MCF 10A (cell line): ENCODE measurements at regions of chr19 and their contacts with region 1.

Region 1: GRCh38 chr19:2950286-2951124 is 5.7 kb upstream of the ZNF77 start:
- DNase-seq: peak; percentile 100
- H3K4me3 Mint-ChIP-seq: peak overlapping the region; percentile 96
- H3K27ac Mint-ChIP-seq: peak overlapping the region; percentile 99
- H3K4me1 Mint-ChIP-seq: peaks cover 16% of the 10 kb centered on the region
- H3K27me3 Mint-ChIP-seq: no peaks in the 10 kb centered on the region
- CTCF ChIP-seq: no peak

Region 2: GRCh38 chr19:2811735-2812406 is 138.6 kb before region 1 on chr19:
- CTCF ChIA-PET with region 1: no interaction called
- POLR2A ChIA-PET with region 1: no interaction called
- intact Hi-C with region 1: no loop called
- DNase-seq: no peak
- H3K4me3 Mint-ChIP-seq: no peak overlapping the region
- H3K27ac Mint-ChIP-seq: no peak overlapping the region
- H3K4me1 Mint-ChIP-seq: no peaks in the 10 kb centered on the region
- H3K27me3 Mint-ChIP-seq: no peaks in the 10 kb centered on the region
- CTCF ChIP-seq: no peak

Region 3: GRCh38 chr19:2887391-2887914 is 63.1 kb before region 1 on chr19:
- CTCF ChIA-PET with region 1: interaction called, 41 read pairs
- POLR2A ChIA-PET with region 1: interaction called, 30 read pairs
- intact Hi-C with region 1: loop called (anchors 1 kb)
- DNase-seq: peak; percentile 70
- H3K4me3 Mint-ChIP-seq: no peak overlapping the region
- H3K27ac Mint-ChIP-seq: no peak overlapping the region
- H3K4me1 Mint-ChIP-seq: no peaks in the 10 kb centered on the region
- H3K27me3 Mint-ChIP-seq: no peaks in the 10 kb centered on the region
- CTCF ChIP-seq: peak; percentile 61

Region 4: DNA sequence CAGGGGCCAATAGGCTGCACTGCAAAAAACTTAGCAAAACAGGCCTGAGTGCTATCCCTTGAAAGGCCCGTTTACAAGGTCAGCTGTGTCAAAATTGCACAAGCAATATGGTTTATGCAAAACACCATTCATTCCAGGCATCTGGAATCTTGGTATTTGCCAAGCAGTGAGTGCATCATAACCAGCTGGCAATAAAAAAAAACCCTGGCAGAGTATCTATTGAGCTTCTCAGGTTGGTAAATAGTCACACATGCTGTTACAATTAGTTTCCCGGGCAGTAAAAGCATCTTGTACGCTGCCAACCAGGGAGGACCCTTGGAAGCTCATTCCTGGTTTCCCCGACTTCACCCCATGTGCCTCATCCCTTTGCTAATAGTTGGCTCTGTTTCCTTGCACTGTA is 27.0 kb before region 1 on chr19:
- CTCF ChIA-PET with region 1: interaction called, 5 read pairs
- POLR2A ChIA-PET with region 1: interaction called, 37 read pairs
- intact Hi-C with region 1: no loop called
- DNase-seq: peak; percentile 74
- H3K4me3 Mint-ChIP-seq: no peak overlapping the region
- H3K27ac Mint-ChIP-seq: peak overlapping the region; percentile 46
- H3K4me1 Mint-ChIP-seq: peaks cover 12% of the 10 kb centered on the region
- H3K27me3 Mint-ChIP-seq: no peaks in the 10 kb centered on the region
- CTCF ChIP-seq: no peak

Region 5: DNA sequence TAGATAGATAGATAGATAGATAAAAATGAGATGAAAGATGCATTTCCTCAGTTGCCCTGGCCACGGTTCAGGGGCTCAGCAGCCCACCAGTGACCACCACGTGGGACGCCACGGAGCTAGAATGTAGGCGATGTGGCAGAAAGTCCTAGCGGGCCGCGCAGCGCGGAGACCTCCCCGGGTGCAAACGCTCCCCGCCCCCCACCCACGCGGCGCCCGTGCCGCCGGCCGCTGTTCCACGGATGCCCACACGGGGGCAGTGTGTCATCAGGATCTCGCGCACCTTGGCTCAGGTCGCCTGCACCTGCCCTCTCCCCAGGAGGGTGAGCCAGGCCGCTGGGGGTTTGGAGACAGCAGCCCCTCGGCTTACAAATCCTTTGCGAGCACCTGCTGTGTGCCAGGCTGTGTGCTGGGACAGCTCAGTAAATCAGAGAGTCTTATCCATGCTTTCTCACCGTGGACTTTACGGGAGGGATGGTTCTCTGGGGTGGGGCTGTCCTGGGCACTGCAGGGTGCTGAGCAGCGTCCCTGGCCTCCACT is 125.5 kb after region 1 on chr19:
- CTCF ChIA-PET with region 1: interaction called, 7 read pairs
- POLR2A ChIA-PET with region 1: interaction called, 3 read pairs
- intact Hi-C with region 1: loop called (anchors 10 kb)
- DNase-seq: peak; percentile 56
- H3K4me3 Mint-ChIP-seq: no peak overlapping the region
- H3K27ac Mint-ChIP-seq: no peak overlapping the region
- H3K4me1 Mint-ChIP-seq: no peaks in the 10 kb centered on the region
- H3K27me3 Mint-ChIP-seq: no peaks in the 10 kb centered on the region
- CTCF ChIP-seq: peak; percentile 87

Region 6: GRCh38 chr19:3125900-3126524 is 175.5 kb after region 1 on chr19:
- CTCF ChIA-PET with region 1: interaction called, 31 read pairs
- POLR2A ChIA-PET with region 1: interaction called, 4 read pairs
- intact Hi-C with region 1: no loop called
- DNase-seq: peak; percentile 41
- H3K4me3 Mint-ChIP-seq: no peak overlapping the region
- H3K27ac Mint-ChIP-seq: no peak overlapping the region
- H3K4me1 Mint-ChIP-seq: no peaks in the 10 kb centered on the region
- H3K27me3 Mint-ChIP-seq: no peaks in the 10 kb centered on the region
- CTCF ChIP-seq: peak; percentile 63